ENCODE measurements at regions of chr10 and their contacts with region 1.

Region 1: GRCh38 chr10:61135276-61135721 is 191.3 kb upstream of the RHOBTB1 start:
- DNase-seq: no peak
- H3K4me3 ChIP-seq: no peak overlapping the region
- H3K27ac ChIP-seq: no peak overlapping the region
- H3K4me1 ChIP-seq: peaks cover 0 to 39% (median 27%) of the 10 kb centered on the region in 4 donors
- H3K27me3 ChIP-seq: no peaks in the 10 kb centered on the region
- CTCF ChIP-seq: no peak
- EP300 ChIP-seq: no peak
- POLR2A ChIP-seq: no peak

Region 2: GRCh38 chr10:61188691-61189090 is 53.4 kb after region 1 on chr10:
- intact Hi-C with region 1: no loop called
- DNase-seq: no peak
- H3K4me3 ChIP-seq: no peak overlapping the region
- H3K27ac ChIP-seq: no peak overlapping the region
- H3K4me1 ChIP-seq: no peaks in the 10 kb centered on the region
- H3K27me3 ChIP-seq: no peaks in the 10 kb centered on the region
- CTCF ChIP-seq: no peak
- EP300 ChIP-seq: no peak
- POLR2A ChIP-seq: no peak

Region 3: GRCh38 chr10:61284222-61284890 is 149.1 kb after region 1 on chr10:
- intact Hi-C with region 1: loop called (anchors 5 kb)
- DNase-seq: no peak
- H3K4me3 ChIP-seq: no peak overlapping the region
- H3K27ac ChIP-seq: peak overlapping the region in 1 of 4 donors; percentile 4
- H3K4me1 ChIP-seq: peaks cover 0 to 40% (median 32%) of the 10 kb centered on the region in 4 donors
- H3K27me3 ChIP-seq: no peaks in the 10 kb centered on the region
- CTCF ChIP-seq: peak; percentile 65 to 81 (median 72)
- EP300 ChIP-seq: no peak
- POLR2A ChIP-seq: no peak

Measured in esophagus muscularis mucosa (tissue), 4 donors.